Activated CD4-positive, alpha-beta T cell treated with anti-CD3 and anti-CD28 coated beads, Interleukin-2, amount 10 ng/mL, durations not matched to agents 24 days and 14 days (primary cell): ENCODE measurements at regions of chr1 and their contacts with region 1.

Region 1: DNA sequence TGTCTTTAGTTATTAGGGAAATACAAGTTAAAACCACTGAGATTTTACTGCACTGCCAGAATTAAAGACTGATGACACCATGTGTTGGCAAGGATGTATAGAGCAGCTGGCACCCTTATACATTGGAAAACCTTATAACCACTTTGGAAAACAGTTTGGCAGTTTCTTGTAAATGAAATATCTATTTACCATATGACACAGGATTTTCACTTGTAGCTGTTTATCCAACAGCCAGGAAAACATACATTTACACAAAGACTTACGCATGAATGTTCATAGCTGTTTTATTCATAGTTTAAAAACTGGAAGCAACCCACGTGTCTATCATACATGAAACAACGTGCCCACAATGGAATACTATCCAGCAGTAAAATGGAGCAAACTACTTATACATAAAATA is 45.3 kb downstream of the PRRC2C start:
- DNase-seq: no peak
- H3K4me3 Mint-ChIP-seq: no peak overlapping the region
- H3K27ac Mint-ChIP-seq: no peak overlapping the region
- H3K4me1 Mint-ChIP-seq: peaks cover 12% of the 10 kb centered on the region
- H3K27me3 Mint-ChIP-seq: no peaks in the 10 kb centered on the region

Region 2: DNA sequence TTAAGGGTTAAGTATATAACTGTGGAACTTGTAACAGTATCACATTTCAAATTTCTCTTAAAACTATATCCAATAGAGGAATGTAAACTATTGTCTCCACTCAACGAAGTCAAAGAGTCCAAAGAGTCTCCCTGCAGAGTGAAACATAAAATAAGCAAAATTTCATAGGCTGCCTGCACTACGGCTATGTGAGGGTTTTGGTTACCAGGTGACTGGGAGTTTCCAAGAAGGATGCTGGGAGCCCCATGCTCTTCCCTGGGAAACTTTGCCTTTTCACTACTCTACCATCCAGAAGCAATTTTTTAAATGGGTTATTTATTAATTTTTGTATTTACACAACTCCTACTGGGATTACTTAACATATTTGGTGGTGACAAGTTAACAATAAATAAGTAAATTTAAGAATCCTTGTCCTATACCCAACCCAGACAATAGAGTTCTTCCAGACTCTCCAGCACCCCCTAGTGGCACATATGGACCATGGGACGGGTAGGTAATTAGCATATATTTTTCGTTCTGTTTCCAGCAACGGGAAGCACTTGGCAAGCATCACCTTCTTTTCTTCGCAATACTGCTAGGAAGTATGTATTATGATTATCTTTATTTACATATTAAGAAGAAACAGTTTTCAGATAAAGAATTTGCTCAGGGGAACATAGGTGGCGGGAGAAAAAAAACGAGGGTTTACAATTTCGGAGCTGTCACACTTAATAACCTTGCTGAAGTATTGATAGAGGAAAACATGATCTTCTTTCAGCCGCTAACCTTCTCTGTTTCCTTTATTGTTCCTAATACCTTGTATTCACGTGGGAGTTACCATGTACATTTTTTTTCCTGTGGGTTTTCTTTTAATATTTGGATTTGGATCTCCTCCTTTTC is 342.0 kb before region 1 on chr1:
- intact Hi-C with region 1: no loop called
- DNase-seq: peak; percentile 79
- H3K4me3 Mint-ChIP-seq: no peak overlapping the region
- H3K27ac Mint-ChIP-seq: no peak overlapping the region
- H3K4me1 Mint-ChIP-seq: no peaks in the 10 kb centered on the region
- H3K27me3 Mint-ChIP-seq: peaks cover 11% of the 10 kb centered on the region

Region 3: DNA sequence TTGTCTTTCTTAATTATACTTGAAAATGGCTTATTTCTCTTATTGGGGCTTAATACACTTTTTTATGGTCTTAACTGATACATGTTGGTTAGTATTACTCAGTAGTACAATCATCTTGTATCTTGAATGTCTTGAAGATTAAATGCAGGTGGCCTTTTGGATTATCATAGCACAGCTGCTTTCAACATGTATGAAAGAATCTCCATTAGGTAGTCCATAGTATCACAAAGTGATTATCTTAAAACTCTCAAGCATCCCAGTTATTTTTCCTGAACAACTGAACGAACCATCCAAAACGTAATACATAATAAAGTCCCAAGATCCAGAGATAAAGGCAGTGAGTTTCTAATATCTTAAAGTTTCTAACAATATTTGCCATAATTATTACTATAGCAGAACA is 39.6 kb after region 1 on chr1:
- intact Hi-C with region 1: loop called (anchors 5 kb)
- DNase-seq: no peak
- H3K4me3 Mint-ChIP-seq: no peak overlapping the region
- H3K27ac Mint-ChIP-seq: no peak overlapping the region
- H3K4me1 Mint-ChIP-seq: peaks cover 2% of the 10 kb centered on the region
- H3K27me3 Mint-ChIP-seq: no peaks in the 10 kb centered on the region